ENCODE measurements at regions of chr1 and their contacts with region 1.

Region 1: GRCh38 chr1:91830242-91831131 is 55.5 kb downstream of the TGFBR3 start:
- DNase-seq: peak; percentile 76
- H3K4me3 ChIP-seq: no peak overlapping the region
- H3K27ac ChIP-seq: peak overlapping the region; percentile 39
- H3K27me3 ChIP-seq: no peaks in the 10 kb centered on the region
- CTCF ChIP-seq: peak; percentile 70

Region 2: GRCh38 chr1:91582431-91582921 is 248.0 kb before region 1 on chr1:
- CTCF ChIA-PET with region 1: no interaction called
- POLR2A ChIA-PET with region 1: no interaction called
- DNase-seq: peak; percentile 96
- H3K4me3 ChIP-seq: no peak overlapping the region
- H3K27ac ChIP-seq: peak overlapping the region; percentile 99
- H3K27me3 ChIP-seq: no peaks in the 10 kb centered on the region
- CTCF ChIP-seq: no peak

Region 3: DNA sequence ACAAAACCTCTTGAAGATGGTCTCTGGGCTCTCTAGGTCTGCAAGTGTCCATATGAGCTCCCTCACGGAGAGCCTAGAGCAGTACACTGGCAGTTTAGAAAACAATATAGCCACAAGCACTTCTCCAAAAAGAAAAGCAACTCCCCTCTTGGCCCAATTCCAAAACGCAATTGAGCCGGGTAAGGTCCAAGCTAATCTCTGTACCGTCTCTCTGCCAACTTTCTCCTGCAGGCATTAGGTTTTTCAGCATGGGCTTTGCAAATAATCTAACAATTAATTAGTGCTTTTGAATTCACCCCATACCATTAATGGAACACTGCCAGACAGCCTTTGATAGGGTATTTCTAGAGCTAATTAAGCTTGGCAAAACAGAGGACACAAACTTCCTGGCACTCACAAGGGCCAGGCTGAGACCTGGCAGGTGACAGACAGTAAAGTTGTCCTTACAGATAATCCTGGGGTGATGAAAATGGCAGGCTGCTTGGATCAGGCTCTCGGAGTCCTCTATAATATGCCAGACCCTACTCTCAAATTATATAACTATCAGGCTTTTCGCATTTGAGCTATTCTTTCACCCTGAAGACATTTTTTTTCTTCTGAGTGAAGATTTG is 15.6 kb after region 1 on chr1:
- CTCF ChIA-PET with region 1: interaction called, 12 read pairs
- POLR2A ChIA-PET with region 1: interaction called, 6 read pairs
- DNase-seq: peak; percentile 29
- H3K4me3 ChIP-seq: no peak overlapping the region
- H3K27ac ChIP-seq: no peak overlapping the region
- H3K27me3 ChIP-seq: no peaks in the 10 kb centered on the region
- CTCF ChIP-seq: no peak

Region 4: DNA sequence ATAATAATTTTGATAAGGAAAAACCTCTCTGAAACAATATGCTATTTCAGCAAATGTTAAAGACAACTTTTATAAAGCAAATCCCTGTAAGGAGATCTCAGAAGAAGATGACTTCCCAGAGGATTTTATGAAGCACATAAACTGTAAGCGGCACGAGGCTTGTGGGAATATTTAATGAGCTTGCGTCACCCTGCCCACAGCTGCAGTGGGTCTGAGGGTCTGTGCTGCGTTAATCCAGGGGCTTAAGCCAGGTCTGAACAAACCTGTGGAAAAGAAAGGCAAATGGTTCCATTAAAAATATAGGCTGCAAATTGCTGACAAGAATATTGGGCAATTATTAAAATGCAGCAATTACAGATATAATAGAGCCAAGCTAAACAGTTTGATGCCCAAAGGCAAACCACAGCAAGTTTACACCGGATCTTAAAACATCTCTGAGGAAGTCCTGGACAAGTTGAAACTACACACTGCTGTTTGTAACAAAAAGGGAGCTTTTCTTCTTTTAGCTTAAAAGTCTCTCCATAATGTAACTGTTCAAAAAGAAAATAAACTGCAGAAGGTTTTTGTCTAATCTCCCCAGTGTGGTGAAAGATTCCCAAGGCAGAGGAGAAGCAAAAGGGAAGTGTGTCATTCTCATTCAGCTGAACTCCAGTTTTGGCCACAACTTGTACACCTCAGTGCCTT is 33.7 kb after region 1 on chr1:
- CTCF ChIA-PET with region 1: interaction called, 14 read pairs
- POLR2A ChIA-PET with region 1: no interaction called
- DNase-seq: no peak
- H3K4me3 ChIP-seq: no peak overlapping the region
- H3K27ac ChIP-seq: peak overlapping the region; percentile 4
- H3K27me3 ChIP-seq: no peaks in the 10 kb centered on the region
- CTCF ChIP-seq: no peak

Region 5: GRCh38 chr1:92118826-92119225 is 288.3 kb after region 1 on chr1:
- CTCF ChIA-PET with region 1: no interaction called
- POLR2A ChIA-PET with region 1: no interaction called
- DNase-seq: no peak
- H3K4me3 ChIP-seq: no peak overlapping the region
- H3K27ac ChIP-seq: no peak overlapping the region
- H3K27me3 ChIP-seq: no peaks in the 10 kb centered on the region
- CTCF ChIP-seq: no peak